Mammary epithelial cell (primary cell): ENCODE measurements at regions of chr4 and their contacts with region 1.

Region 1: DNA sequence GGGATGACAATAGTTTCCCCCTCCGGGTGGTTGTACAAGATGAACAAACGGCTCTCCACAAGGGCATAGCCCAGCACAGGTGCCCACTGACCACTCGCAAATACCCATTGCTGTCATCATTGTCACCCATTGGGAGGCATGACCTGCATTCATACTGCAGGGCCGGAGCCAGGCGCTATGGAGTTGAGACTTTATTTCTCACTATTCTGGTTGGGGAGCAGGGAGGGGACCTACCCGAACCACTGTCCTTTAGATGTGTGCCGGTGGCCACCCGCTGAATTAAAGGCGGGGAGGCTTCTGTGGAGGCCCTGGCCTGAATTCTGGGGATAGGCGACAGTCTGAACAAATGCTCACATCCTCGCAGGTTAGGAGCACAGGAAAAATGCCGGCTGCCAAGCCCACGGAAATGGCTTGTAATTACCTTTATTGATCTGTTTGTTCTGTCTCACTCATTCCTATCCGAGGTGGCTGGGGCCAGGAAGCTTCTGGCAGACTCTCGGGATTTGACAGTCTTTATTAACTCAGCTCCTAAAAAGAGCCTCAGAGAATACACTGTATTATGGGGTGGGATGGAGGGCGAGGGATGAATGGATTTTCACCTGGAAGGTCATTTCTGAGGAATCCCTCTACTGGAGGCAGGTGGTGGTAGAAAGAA is 125.1 kb upstream of the PSAPL1 start:
- DNase-seq: no peak
- H3K4me3 ChIP-seq: no peak overlapping the region
- H3K27ac ChIP-seq: no peak overlapping the region
- H3K4me1 ChIP-seq: peaks cover 11% of the 10 kb centered on the region
- H3K27me3 ChIP-seq: no peaks in the 10 kb centered on the region
- CTCF ChIP-seq: no peak

Region 2: GRCh38 chr4:7280926-7281690 is 278.8 kb before region 1 on chr4:
- CTCF ChIA-PET with region 1: no interaction called
- dilution Hi-C with region 1: loop called (anchors 5 kb)
- in situ Hi-C with region 1: no loop called
- intact Hi-C with region 1: no loop called
- DNase-seq: peak; percentile 87
- H3K4me3 ChIP-seq: no peak overlapping the region
- H3K27ac ChIP-seq: no peak overlapping the region
- H3K4me1 ChIP-seq: peaks cover 26% of the 10 kb centered on the region
- H3K27me3 ChIP-seq: no peaks in the 10 kb centered on the region
- CTCF ChIP-seq: no peak

Region 3: DNA sequence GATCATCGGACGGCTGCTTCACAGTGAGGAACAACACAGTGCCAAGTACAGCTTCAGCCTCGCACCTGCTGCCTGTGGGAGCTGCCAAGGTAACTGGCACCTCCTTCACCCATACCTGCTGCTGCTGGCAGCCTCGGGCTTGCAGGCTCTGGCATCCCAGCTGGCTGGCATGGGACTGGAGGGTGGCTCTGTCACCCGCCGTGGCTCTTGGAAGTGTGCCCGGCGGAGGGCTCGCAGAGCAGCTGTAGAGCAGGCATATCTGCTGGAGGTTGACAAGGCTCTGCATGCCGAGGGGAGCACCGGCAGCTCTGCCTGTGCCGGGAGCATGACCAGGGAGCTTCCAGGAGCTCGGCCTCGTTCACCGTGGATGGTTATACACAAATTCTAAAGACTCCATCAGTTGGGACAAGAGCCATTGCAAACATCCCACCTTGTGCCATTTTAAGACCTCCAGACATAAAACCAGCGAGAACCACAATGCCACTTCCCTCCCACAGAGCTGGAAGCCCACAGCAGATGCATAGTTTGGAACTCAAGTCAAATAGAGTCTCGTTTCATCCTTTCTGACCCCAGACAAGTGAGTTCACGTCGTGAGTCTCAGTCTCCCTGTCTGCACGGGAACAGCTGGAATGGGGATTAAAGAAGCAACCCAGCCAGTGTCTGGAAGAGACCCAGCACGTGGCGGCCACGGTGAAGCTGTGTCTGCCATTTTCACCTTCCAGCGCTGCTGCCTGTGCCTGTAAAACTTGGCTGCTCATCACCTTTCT is 40.8 kb before region 1 on chr4:
- CTCF ChIA-PET with region 1: no interaction called
- dilution Hi-C with region 1: loop called (anchors 5 kb)
- in situ Hi-C with region 1: no loop called
- intact Hi-C with region 1: no loop called
- DNase-seq: no peak
- H3K4me3 ChIP-seq: no peak overlapping the region
- H3K27ac ChIP-seq: no peak overlapping the region
- H3K4me1 ChIP-seq: no peaks in the 10 kb centered on the region
- H3K27me3 ChIP-seq: peaks cover 11% of the 10 kb centered on the region
- CTCF ChIP-seq: no peak

Region 4: DNA sequence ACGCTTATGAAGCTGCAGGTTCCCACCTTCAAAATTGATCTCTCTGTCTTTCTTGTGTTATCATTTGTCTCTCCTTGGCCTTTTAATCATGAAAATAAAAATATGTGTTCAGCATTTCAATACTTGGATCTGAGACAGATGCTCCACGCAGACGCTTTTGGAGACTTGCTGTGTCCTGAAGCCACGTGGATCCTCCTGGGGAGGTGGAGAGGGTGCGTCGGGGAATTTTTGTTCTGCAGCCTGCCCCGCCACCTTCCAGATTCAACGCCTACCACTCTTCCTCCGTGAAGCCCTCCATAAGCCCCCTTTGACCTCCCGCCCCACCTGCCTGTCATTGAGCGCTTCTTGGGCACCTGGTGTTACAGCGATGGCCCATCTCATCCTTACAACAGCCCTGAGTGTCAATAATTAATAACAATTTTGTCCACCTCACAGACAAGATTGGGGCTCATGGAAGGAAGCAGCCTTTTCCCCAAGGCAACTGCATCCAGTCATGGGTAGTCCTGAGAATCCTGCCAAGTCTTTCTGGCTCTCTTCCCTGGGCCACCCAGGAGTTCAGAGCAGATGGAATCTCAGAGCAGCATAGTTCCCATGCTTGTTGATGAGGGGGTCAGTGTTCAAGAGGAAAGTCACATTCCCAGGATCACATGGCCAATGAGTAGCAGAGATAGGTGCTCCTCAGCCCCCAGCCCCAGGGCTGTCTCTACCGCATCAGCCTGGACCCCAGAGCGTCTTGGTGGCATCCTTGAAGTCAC is 47.5 kb after region 1 on chr4:
- CTCF ChIA-PET with region 1: no interaction called
- dilution Hi-C with region 1: loop called (anchors 5 kb)
- in situ Hi-C with region 1: no loop called
- intact Hi-C with region 1: no loop called
- DNase-seq: no peak
- H3K4me3 ChIP-seq: no peak overlapping the region
- H3K27ac ChIP-seq: no peak overlapping the region
- H3K4me1 ChIP-seq: no peaks in the 10 kb centered on the region
- H3K27me3 ChIP-seq: no peaks in the 10 kb centered on the region
- CTCF ChIP-seq: no peak

Region 5: DNA sequence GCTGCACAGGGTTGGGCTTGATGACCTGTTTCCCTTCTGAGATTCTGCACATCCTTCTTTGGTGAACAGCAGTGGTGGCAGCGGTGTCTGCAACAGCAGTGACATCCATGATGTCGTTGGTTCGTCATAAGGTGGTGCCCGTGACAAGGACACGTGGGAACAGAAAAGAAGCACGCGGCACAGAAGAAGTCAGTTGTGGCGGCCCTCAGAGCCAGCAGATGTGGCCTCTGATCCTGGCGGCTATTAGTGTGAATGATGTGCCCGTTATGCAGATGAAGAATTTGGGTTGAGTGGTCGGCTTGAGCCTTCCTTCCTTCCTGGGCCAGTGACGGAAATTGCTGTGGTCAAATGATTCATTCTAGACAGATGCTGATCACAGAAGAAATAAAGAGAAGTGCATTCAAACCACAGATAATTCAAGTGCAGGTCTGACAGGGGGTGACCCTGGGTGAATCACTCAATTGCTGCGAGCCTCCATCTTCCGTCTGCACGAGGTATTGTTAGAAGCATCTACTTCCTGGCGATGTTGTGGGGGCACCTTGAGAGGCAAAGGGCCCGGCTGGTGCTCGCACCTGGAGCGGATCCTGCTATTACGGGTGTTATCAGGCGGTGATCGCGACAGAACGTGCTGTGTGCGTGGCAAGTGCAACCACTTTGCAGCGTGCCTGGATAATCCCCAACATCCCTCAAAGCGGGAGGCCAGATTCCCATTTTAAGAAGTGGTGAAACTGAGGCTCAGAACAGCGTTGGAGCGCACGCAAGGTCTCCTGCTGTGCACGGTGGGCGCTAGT is 90.1 kb after region 1 on chr4:
- CTCF ChIA-PET with region 1: interaction called, 3 read pairs
- dilution Hi-C with region 1: loop called (anchors 5 kb)
- in situ Hi-C with region 1: no loop called
- intact Hi-C with region 1: no loop called
- DNase-seq: peak; percentile 82
- H3K4me3 ChIP-seq: no peak overlapping the region
- H3K27ac ChIP-seq: peak overlapping the region; percentile 33
- H3K4me1 ChIP-seq: peaks cover 51% of the 10 kb centered on the region
- H3K27me3 ChIP-seq: no peaks in the 10 kb centered on the region
- CTCF ChIP-seq: no peak

Region 6: GRCh38 chr4:7679406-7680040 is 119.7 kb after region 1 on chr4:
- CTCF ChIA-PET with region 1: no interaction called
- dilution Hi-C with region 1: loop called (anchors 5 kb)
- in situ Hi-C with region 1: no loop called
- intact Hi-C with region 1: no loop called
- DNase-seq: no peak
- H3K4me3 ChIP-seq: no peak overlapping the region
- H3K27ac ChIP-seq: no peak overlapping the region
- H3K4me1 ChIP-seq: peaks cover 28% of the 10 kb centered on the region
- H3K27me3 ChIP-seq: no peaks in the 10 kb centered on the region
- CTCF ChIP-seq: no peak